Esophagus muscularis mucosa (tissue), 4 donors: ENCODE measurements at regions of chr3 and their contacts with region 1.

Region 1: GRCh38 chr3:11719406-11720230 is 75.9 kb upstream of the VGLL4 start:
- DNase-seq: no peak
- H3K4me3 ChIP-seq: peak overlapping the region; percentile 77 to 96 (median 84)
- H3K27ac ChIP-seq: peak overlapping the region; percentile 90 to 96 (median 94)
- H3K4me1 ChIP-seq: peaks cover 19 to 36% (median 32%) of the 10 kb centered on the region in 4 donors
- H3K27me3 ChIP-seq: no peaks in the 10 kb centered on the region
- CTCF ChIP-seq: no peak
- EP300 ChIP-seq: no peak
- POLR2A ChIP-seq: no peak

Region 2: GRCh38 chr3:11671648-11672100 is 47.9 kb before region 1 on chr3:
- intact Hi-C with region 1: loop called (anchors 5 kb)
- DNase-seq: peak; percentile 74
- H3K4me3 ChIP-seq: no peak overlapping the region
- H3K27ac ChIP-seq: no peak overlapping the region
- H3K4me1 ChIP-seq: peaks cover 20 to 45% (median 39%) of the 10 kb centered on the region in 4 donors
- H3K27me3 ChIP-seq: no peaks in the 10 kb centered on the region
- CTCF ChIP-seq: no peak
- EP300 ChIP-seq: no peak
- POLR2A ChIP-seq: no peak